CD8-positive, alpha-beta T cell (primary cell): ENCODE measurements at regions of chr11 and their contacts with region 1.

Region 1: DNA sequence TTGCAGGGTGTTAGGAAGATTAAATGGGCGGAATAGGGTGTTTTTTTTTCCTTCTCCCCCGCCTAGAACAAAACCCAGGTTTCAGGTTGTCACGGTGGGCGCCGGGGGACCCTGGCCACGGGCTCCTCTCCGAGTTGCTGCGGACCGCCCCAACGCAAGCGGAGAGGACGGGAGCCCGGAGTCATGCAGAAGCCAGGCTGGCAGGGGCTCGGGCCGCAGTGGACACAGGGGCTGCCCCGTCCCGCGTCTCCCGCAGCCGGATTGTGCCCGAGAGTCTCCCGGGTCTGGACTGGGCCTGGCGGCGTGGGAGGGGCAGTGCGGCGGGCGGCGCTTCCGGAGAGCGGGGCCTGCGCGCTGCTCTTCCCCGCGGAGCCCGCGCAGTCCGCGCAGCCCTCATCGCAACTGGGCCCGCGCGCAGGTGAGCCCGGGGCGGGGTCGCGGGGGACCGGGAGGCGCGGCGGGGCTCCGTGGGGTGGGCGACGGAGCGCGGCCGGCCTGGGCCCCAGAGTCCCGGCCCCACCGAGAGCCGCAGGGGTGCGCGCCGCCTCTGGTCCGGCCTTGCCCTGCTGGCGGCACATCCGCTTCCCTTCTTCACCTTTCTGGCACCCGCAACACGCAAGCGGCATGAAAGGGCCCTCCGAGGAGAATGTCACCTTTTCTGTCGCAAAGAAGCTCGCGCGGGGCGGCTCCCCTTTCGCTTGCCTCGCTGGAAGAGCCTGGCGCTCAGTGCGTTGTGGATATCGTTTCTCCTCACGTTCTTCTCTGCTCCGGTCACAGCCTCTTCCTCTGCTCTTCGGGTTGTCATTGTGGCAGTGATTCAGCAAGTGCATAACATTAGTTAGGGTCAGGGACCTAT is at the start of gene TIRAP:
- DNase-seq: peak; percentile 28 to 83 (median 65)
- ATAC-seq: peak; percentile 60
- H3K4me3 ChIP-seq: peak within 1 kb of the TSS; percentile 88 to 99
- H3K4me3 Mint-ChIP-seq: peak within 1 kb of the TSS; percentile 88
- H3K27ac ChIP-seq: peak within 1 kb of the TSS; percentile 78 to 87
- H3K27ac Mint-ChIP-seq: peak within 1 kb of the TSS; percentile 98
- H3K4me1 ChIP-seq: peaks cover 34% of the 10 kb centered on the region
- H3K4me1 Mint-ChIP-seq: peaks cover 48% of the 10 kb centered on the region
- H3K27me3 ChIP-seq: no peaks in the 10 kb centered on the region
- H3K27me3 Mint-ChIP-seq: no peaks in the 10 kb centered on the region
- CTCF ChIP-seq: no peak
- total RNA-seq, gene TIRAP: 6.7 to 7.9 TPM

Region 2: DNA sequence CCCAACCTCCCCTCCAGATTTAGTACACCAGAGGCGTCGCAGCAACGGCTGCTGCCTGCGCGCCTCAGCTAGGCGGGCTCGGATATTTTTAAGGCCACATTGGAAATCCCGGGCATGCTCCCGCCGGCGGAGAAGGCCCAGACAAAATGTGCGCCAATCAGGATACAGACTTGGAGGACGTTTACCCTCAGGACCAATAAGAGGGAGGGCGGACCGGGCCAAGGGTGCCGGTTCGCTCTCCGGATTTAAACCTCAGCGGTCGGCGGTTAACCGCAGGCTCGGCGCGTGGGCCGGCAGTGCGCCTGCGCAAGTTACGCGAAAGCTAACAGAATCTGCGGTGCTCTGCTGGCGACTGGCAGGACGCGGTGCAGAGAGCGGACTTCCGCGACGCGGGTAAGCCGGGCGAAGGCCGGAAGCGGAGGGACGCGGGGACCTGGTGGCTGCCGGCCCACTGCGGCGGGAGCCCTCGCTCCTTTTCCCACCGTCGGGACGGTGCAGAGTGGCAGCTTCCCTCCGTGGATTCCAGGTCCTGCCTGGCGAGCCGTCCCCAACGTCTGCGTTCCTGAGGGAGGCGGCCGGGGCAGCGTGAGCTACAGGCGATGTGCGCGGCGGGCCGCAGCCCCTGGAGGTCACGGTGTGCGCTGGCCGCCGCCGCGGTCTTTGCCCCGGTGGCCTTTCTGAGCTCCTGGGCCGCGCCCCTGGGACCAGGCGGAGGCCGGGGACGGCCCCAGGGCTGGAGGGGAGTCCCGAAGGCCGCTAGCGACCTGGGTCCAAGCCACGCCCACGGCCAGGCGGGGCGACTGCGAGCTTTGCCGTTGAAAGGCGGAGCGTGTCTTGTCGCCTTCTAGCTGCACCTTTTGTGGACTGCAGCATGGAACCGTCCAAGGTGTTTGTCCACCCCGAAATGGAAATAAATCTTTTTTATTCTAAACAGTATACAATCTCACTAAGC is 395.3 kb before region 1 on chr11 and contains the start of gene HYLS1:
- CTCF ChIA-PET with region 1: no interaction called
- POLR2A ChIA-PET with region 1: interaction called, 6 read pairs
- intact Hi-C with region 1: loop called in 1 of 2 experiments (anchors 5 kb)
- DNase-seq: peak; percentile 87 to 97 (median 94)
- ATAC-seq: peak; percentile 88
- H3K4me3 ChIP-seq: peak within 1 kb of the TSS; percentile 81 to 84
- H3K4me3 Mint-ChIP-seq: peak within 1 kb of the TSS; percentile 88
- H3K27ac ChIP-seq: peak within 1 kb of the TSS; percentile 61 to 87
- H3K27ac Mint-ChIP-seq: peak within 1 kb of the TSS; percentile 87
- H3K4me1 ChIP-seq: peaks cover 10% of the 10 kb centered on the region
- H3K4me1 Mint-ChIP-seq: peaks cover 31% of the 10 kb centered on the region
- H3K27me3 ChIP-seq: no peaks in the 10 kb centered on the region
- H3K27me3 Mint-ChIP-seq: no peaks in the 10 kb centered on the region
- CTCF ChIP-seq: no peak
- total RNA-seq, gene HYLS1: 1.1 to 1.2 TPM

Region 3: GRCh38 chr11:125902927-125903710 is 379.8 kb before region 1 on chr11 and contains the start of gene PUS3:
- CTCF ChIA-PET with region 1: no interaction called
- POLR2A ChIA-PET with region 1: interaction called, 3 read pairs
- intact Hi-C with region 1: loop called in 1 of 2 experiments (anchors 5 kb)
- DNase-seq: peak; percentile 67 to 91 (median 87)
- ATAC-seq: peak; percentile 92
- H3K4me3 ChIP-seq: peak within 1 kb of the TSS; percentile 58 to 77
- H3K4me3 Mint-ChIP-seq: peak within 1 kb of the TSS; percentile 95
- H3K27ac ChIP-seq: peak within 1 kb of the TSS; percentile 48 to 67
- H3K27ac Mint-ChIP-seq: peak within 1 kb of the TSS; percentile 91
- H3K4me1 ChIP-seq: peaks cover 16% of the 10 kb centered on the region
- H3K4me1 Mint-ChIP-seq: peaks cover 41% of the 10 kb centered on the region
- H3K27me3 ChIP-seq: peaks cover 5 to 7% of the 10 kb centered on the region in 2 experiments
- H3K27me3 Mint-ChIP-seq: peaks cover 19% of the 10 kb centered on the region
- CTCF ChIP-seq: no peak
- total RNA-seq, gene PUS3: 4.5 to 5.2 TPM

Region 4: DNA sequence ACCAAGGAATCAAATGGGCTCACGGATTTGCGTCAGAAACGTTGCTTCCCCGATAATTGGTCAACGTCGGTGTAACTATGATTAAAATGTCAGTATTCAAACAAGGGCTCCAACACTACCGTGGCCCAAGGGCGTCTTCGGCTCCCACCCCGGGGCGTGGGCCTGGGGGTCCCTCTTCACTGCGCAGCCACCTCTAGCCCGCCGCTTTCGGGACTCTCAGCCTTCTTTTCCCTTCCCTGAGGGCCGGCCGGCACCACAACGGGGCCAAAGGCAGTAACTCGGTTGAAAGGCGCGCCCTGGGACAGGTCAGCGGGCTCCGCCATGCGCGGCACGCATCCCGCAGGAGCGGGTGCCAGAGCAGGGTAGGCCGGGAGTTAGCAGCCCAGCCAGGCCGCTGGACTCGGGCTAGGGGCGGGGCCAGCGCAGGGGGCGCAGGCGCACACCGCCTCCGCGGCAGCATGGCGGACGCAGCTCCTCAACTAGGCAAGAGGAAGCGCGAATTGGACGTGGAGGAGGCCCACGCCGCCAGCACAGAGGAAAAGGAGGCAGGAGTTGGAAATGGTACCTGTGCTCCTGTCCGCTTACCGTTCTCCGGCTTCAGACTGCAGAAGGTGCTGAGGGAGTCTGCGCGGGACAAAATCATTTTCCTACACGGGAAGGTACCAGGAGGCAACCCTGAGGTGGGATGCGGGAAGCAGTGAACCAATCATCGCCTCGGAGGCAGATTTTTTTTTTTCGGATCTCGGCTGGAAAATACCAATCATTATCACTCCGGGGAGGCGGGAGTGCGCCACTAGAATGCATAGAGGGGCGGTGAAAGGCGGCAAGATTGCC is 20.9 kb after region 1 on chr11 and contains the start of gene DCPS:
- CTCF ChIA-PET with region 1: interaction called, 5 read pairs
- POLR2A ChIA-PET with region 1: interaction called, 9 read pairs
- intact Hi-C with region 1: loop called (anchors 1 kb)
- DNase-seq: peak; percentile 66 to 92 (median 84)
- ATAC-seq: peak; percentile 96
- H3K4me3 ChIP-seq: peak within 1 kb of the TSS; percentile 93 to 97
- H3K4me3 Mint-ChIP-seq: peak within 1 kb of the TSS; percentile 88
- H3K27ac ChIP-seq: peak within 1 kb of the TSS; percentile 92 to 94
- H3K27ac Mint-ChIP-seq: peak within 1 kb of the TSS; percentile 89
- H3K4me1 ChIP-seq: peaks cover 21% of the 10 kb centered on the region
- H3K4me1 Mint-ChIP-seq: peaks cover 35% of the 10 kb centered on the region
- H3K27me3 ChIP-seq: no peaks in the 10 kb centered on the region
- H3K27me3 Mint-ChIP-seq: no peaks in the 10 kb centered on the region
- CTCF ChIP-seq: no peak
- total RNA-seq, gene DCPS: 7.3 to 7.5 TPM

Region 5: GRCh38 chr11:126544108-126545056 is 261.4 kb after region 1 on chr11:
- CTCF ChIA-PET with region 1: no interaction called
- POLR2A ChIA-PET with region 1: no interaction called
- intact Hi-C with region 1: no loop called
- DNase-seq: no peak
- ATAC-seq: no peak
- H3K4me3 ChIP-seq: no peak overlapping the region
- H3K4me3 Mint-ChIP-seq: no peak overlapping the region
- H3K27ac ChIP-seq: no peak overlapping the region
- H3K27ac Mint-ChIP-seq: no peak overlapping the region
- H3K4me1 ChIP-seq: no peaks in the 10 kb centered on the region
- H3K4me1 Mint-ChIP-seq: no peaks in the 10 kb centered on the region
- H3K27me3 ChIP-seq: no peaks in the 10 kb centered on the region
- H3K27me3 Mint-ChIP-seq: peaks cover 15% of the 10 kb centered on the region
- CTCF ChIP-seq: no peak